ENCODE measurements at regions of chr3 and their contacts with region 1.

Region 1: GRCh38 chr3:149494022-149494758 is 19.7 kb downstream of the TM4SF4 start:
- DNase-seq: peak; percentile 62 to 80 (median 71)
- H3K4me3 ChIP-seq: no peak overlapping the region
- H3K27ac ChIP-seq: no peak overlapping the region
- H3K4me1 ChIP-seq: no peaks in the 10 kb centered on the region
- H3K27me3 ChIP-seq: no peaks in the 10 kb centered on the region
- CTCF ChIP-seq: peak; percentile 65 to 77 (median 72)
- EP300 ChIP-seq: no peak
- POLR2A ChIP-seq: no peak

Region 2: GRCh38 chr3:149352556-149352955 is 141.6 kb before region 1 on chr3:
- intact Hi-C with region 1: loop called in 1 of 4 experiments (anchors 10 kb)
- DNase-seq: peak; percentile 29 to 54 (median 44)
- H3K4me3 ChIP-seq: no peak overlapping the region
- H3K27ac ChIP-seq: no peak overlapping the region
- H3K4me1 ChIP-seq: peaks cover 5% of the 10 kb centered on the region
- H3K27me3 ChIP-seq: no peaks in the 10 kb centered on the region
- CTCF ChIP-seq: peak in 2 of 3 donors; percentile 16 to 54
- EP300 ChIP-seq: no peak
- POLR2A ChIP-seq: no peak

Region 3: GRCh38 chr3:149808209-149808829 is 314.1 kb after region 1 on chr3:
- intact Hi-C with region 1: loop called in 1 of 4 experiments (anchors 10 kb)
- DNase-seq: peak; percentile 51 to 67 (median 64)
- H3K4me3 ChIP-seq: no peak overlapping the region
- H3K27ac ChIP-seq: no peak overlapping the region
- H3K4me1 ChIP-seq: peaks cover 2% of the 10 kb centered on the region
- H3K27me3 ChIP-seq: no peaks in the 10 kb centered on the region
- CTCF ChIP-seq: peak; percentile 35 to 41 (median 39)
- EP300 ChIP-seq: no peak
- POLR2A ChIP-seq: no peak

Region 4: GRCh38 chr3:150925751-150926201 is 1431.6 kb after region 1 on chr3:
- intact Hi-C with region 1: no loop called
- DNase-seq: peak in 2 of 5 donors; percentile 19 to 44
- H3K4me3 ChIP-seq: no peak overlapping the region
- H3K27ac ChIP-seq: no peak overlapping the region
- H3K4me1 ChIP-seq: peaks cover 2% of the 10 kb centered on the region
- H3K27me3 ChIP-seq: no peaks in the 10 kb centered on the region
- CTCF ChIP-seq: no peak
- EP300 ChIP-seq: no peak
- POLR2A ChIP-seq: no peak